Ascending aorta (tissue), 2 donors: ENCODE measurements at regions of chr11 and their contacts with region 1.

Region 1: GRCh38 chr11:72793425-72794367 is at the start of gene STARD10:
- DNase-seq: peak; percentile 86 to 97
- H3K4me3 ChIP-seq: peak within 1 kb of the TSS; percentile 64 to 67
- H3K27ac ChIP-seq: peak within 1 kb of the TSS; percentile 86
- H3K4me1 ChIP-seq: peaks cover 14 to 25% of the 10 kb centered on the region in 2 donors
- H3K27me3 ChIP-seq: no peaks in the 10 kb centered on the region
- CTCF ChIP-seq: peak; percentile 92 to 100 (median 97)
- total RNA-seq, gene STARD10: 20.9 TPM

Region 2: DNA sequence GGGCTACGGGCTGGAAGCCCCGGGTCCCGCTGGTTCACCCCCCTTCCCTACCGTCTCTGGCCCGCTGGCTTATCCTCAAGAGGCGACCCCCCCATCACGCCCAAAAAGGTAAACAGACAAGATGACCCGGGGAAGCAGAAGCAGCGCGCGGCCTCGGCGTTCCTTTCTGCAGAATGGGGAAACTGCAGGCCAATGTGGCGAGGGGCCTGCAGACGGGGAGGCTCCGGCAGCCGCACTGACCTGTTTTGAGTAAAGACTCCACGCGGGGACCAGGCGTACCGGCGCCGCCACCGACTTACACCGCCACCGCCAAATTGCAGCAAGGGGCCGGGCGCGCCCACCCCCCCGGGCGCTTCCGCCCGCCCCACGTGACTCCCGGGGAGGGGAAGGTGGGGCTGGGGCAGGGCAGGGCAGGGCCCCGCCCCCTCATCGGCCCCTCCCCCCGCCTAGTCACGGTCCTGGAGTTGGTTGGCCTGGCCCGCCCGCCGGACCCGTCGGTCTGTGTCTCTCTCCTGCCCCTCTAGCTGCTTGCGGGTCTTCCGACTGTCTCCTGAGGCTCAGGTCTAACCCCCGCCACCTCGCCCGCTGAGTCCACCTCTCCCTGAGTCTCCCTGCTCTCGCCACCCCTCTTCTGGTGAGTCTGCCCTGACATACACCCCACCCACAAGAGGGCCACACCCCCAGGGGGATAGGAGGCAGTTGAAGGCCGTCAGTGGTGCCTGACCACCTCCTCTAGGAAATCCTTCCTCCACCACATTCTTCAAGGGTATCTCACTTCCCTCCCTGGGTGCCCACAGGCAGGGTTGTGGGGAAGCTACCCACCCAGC is 41.4 kb before region 1 on chr11 and contains the start of gene ARAP1:
- intact Hi-C with region 1: loop called (anchors 2 kb)
- DNase-seq: peak in 1 of 2 donors; percentile 86
- H3K4me3 ChIP-seq: peak within 1 kb of the TSS; percentile 68 to 72
- H3K27ac ChIP-seq: peak within 1 kb of the TSS; percentile 34 to 43
- H3K4me1 ChIP-seq: peaks cover 6 to 15% of the 10 kb centered on the region in 2 donors
- H3K27me3 ChIP-seq: no peaks in the 10 kb centered on the region
- CTCF ChIP-seq: no peak
- total RNA-seq, gene ARAP1: 238 TPM

Region 3: GRCh38 chr11:72814286-72815109 is 20.8 kb after region 1 on chr11 and contains the start of gene ATG16L2:
- intact Hi-C with region 1: loop called (anchors 1 kb)
- DNase-seq: peak in 1 of 2 donors; percentile 85
- H3K4me3 ChIP-seq: peak within 1 kb of the TSS; percentile 81 to 85
- H3K27ac ChIP-seq: peak within 1 kb of the TSS; percentile 92 to 96
- H3K4me1 ChIP-seq: peaks cover 10 to 29% of the 10 kb centered on the region in 2 donors
- H3K27me3 ChIP-seq: no peaks in the 10 kb centered on the region
- CTCF ChIP-seq: peak; percentile 7 to 61 (median 22)
- total RNA-seq, gene ATG16L2: 21.2 TPM